SK-N-SH (cell line): ENCODE measurements at regions of chr11 and their contacts with region 1.

Region 1: DNA sequence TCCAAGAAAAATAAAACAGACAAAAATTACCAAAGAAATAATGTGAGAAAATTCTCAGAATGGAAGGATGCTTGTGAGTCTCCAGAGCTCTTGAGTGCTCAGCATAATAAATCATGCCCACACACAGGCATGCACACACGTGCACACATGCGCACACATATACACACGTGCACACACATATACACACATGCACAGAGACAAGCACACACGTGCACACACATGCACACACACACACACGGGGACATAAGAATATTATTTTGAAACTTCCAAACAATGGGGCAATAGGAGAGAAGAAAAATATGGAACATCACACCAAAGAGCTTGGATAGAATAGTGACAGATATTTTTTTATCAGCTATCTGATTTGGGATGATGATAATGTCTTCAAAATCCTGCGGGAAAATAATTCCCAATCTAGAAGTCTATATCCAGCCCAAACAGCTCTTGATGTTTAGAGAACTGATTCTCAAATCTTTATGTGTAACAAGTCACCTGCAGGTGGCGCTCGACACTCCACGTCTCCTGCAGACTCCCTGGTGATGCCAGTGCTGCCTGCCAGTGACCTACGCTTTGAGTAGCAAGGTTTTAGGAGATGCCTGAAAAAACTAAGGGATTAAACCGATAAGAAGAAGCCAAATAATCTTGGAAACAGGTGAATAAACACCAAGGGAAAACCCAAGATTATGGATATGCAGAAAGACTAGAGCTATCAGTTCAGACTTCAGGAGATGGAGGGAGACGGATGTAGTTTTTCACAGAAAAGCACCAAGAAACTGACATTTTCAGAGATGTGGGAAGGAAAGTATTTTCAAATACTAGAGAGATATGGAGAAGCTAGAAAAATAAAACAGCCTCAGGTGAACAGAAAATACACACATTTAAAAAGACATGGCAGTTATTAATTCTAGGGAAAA is 743.6 kb downstream of the ETS1 start:
- DNase-seq: peak; percentile 68
- H3K4me3 ChIP-seq: no peak overlapping the region; a peak in 1 of 4 replicates
- H3K27ac ChIP-seq: peak overlapping the region in 1 of 2 experiments; percentile 45; a peak in 2 of 4 replicates
- H3K4me1 ChIP-seq: peaks cover 0 to 4% of the 10 kb centered on the region in 2 experiments; a peak in 2 of 4 replicates
- H3K27me3 ChIP-seq: no peaks in the 10 kb centered on the region
- CTCF ChIP-seq: peak; percentile 87
- EP300 ChIP-seq: no peak
- RAD21 ChIP-seq: peak; percentile 80

Region 2: DNA sequence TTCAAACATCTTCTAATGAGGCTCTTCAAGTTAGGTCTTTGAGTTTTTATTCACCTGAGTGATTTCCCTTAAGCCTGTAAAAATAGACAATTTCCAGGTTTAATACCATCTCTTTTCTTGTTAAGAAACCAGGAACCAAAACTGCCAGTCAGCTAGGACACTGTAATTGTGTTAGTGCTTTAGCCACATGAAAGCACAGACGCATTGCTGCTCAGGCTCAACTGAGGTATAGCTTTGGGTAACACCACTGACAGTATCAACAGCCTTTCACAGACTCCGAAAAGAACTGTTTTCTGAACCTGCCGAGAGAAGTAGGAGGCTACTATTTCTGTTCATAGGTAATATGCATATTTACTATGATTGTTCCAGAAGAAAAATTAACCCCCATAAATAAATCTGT is 25.1 kb before region 1 on chr11:
- CTCF ChIA-PET with region 1: interaction called, 14 read pairs
- POLR2A ChIA-PET with region 1: no interaction called
- DNase-seq: no peak
- H3K4me3 ChIP-seq: no peak overlapping the region
- H3K27ac ChIP-seq: no peak overlapping the region
- H3K4me1 ChIP-seq: peaks cover 0 to 2% of the 10 kb centered on the region in 2 experiments; a peak in 1 of 4 replicates
- H3K27me3 ChIP-seq: no peaks in the 10 kb centered on the region
- CTCF ChIP-seq: no peak
- EP300 ChIP-seq: no peak
- RAD21 ChIP-seq: no peak

Region 3: GRCh38 chr11:127859941-127860354 is 16.2 kb after region 1 on chr11:
- CTCF ChIA-PET with region 1: interaction called, 13 read pairs
- POLR2A ChIA-PET with region 1: no interaction called
- DNase-seq: no peak
- H3K4me3 ChIP-seq: no peak overlapping the region
- H3K27ac ChIP-seq: no peak overlapping the region
- H3K4me1 ChIP-seq: peaks cover 0 to 7% of the 10 kb centered on the region in 2 experiments; a peak in 2 of 4 replicates
- H3K27me3 ChIP-seq: no peaks in the 10 kb centered on the region
- CTCF ChIP-seq: no peak
- EP300 ChIP-seq: no peak
- RAD21 ChIP-seq: no peak

Region 4: DNA sequence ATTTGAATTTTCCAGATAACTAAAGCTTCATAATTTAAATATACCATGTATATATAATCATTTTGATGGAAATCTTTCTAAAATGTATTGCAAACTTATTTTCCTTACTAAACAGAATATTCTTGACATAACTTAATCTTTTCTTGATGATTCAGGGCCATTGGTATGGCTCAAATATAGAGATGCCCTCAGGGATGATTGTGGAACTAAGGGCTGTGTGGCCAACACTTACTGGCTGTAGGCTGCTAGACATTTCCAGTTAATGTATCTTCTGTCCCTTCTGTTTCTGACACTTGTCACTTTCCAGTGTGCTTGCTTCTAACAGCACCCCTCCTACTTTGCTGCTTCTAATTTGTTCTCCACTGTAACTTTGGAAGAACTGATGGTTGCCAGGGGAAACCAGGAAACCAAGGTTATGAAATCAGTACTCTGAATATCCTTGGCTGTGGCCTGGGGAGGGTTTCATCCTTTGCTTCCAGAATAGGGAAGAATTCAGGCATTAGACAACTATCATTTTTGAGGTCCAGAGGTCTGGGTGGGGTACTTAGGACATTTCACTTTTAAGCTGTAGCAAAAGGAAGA is 46.4 kb after region 1 on chr11:
- CTCF ChIA-PET with region 1: interaction called, 11 read pairs
- POLR2A ChIA-PET with region 1: no interaction called
- DNase-seq: no peak
- H3K4me3 ChIP-seq: no peak overlapping the region
- H3K27ac ChIP-seq: no peak overlapping the region
- H3K4me1 ChIP-seq: no peaks in the 10 kb centered on the region
- H3K27me3 ChIP-seq: no peaks in the 10 kb centered on the region
- CTCF ChIP-seq: no peak
- EP300 ChIP-seq: no peak
- RAD21 ChIP-seq: no peak

Region 5: DNA sequence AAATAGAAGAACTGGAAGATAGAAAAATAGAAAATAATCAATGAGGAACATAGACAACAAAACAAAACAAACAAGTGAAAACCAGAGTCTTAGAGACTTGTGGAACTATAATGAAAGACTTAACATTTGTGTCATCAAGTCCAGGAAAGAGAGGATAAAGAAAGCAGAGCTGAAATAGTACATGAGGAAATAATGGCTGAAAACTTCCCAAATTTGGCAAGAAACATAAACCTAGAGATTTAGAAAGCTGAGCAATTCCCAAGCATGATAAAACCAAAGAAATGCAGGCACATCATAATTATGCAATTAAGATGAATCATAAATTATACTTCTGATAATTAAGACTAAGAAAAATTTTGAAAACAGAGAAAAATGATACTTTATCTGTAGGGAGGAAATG is 129.1 kb after region 1 on chr11:
- CTCF ChIA-PET with region 1: no interaction called
- POLR2A ChIA-PET with region 1: no interaction called
- DNase-seq: no peak
- H3K4me3 ChIP-seq: no peak overlapping the region
- H3K27ac ChIP-seq: no peak overlapping the region
- H3K4me1 ChIP-seq: no peaks in the 10 kb centered on the region
- H3K27me3 ChIP-seq: no peaks in the 10 kb centered on the region
- CTCF ChIP-seq: no peak
- EP300 ChIP-seq: no peak
- RAD21 ChIP-seq: no peak

Region 6: DNA sequence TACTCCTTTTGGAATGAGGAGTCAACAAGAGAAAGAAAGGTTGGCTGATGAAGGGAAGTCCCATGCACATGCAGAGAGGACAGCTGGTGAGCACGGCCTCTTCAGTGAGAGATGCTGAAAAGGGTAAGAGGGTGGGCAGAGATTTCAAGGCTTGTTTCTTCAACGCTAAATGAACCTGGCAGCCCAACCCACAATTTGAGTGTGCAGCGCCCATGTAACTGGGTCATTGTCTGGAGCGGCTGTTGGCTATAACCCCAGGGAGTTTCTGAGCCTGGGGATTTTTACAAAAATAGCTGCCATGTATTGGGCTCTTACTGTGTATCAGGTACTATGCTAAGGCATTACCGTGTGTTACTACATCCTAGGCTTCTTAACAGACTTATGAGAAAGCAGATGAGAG is 149.5 kb after region 1 on chr11:
- CTCF ChIA-PET with region 1: interaction called, 12 read pairs
- POLR2A ChIA-PET with region 1: no interaction called
- DNase-seq: no peak
- H3K4me3 ChIP-seq: no peak overlapping the region
- H3K27ac ChIP-seq: no peak overlapping the region
- H3K4me1 ChIP-seq: peaks cover 0 to 5% of the 10 kb centered on the region in 2 experiments; a peak in 1 of 4 replicates
- H3K27me3 ChIP-seq: no peaks in the 10 kb centered on the region
- CTCF ChIP-seq: no peak
- EP300 ChIP-seq: no peak
- RAD21 ChIP-seq: no peak

Region 7: GRCh38 chr11:128026596-128026995 is 182.9 kb after region 1 on chr11:
- CTCF ChIA-PET with region 1: interaction called, 70 read pairs
- POLR2A ChIA-PET with region 1: no interaction called
- DNase-seq: no peak
- H3K4me3 ChIP-seq: no peak overlapping the region
- H3K27ac ChIP-seq: peak overlapping the region in 1 of 2 experiments; percentile 69; a peak in 2 of 4 replicates
- H3K4me1 ChIP-seq: peaks cover 5 to 14% of the 10 kb centered on the region in 2 experiments; a peak in 2 of 4 replicates
- H3K27me3 ChIP-seq: no peaks in the 10 kb centered on the region
- CTCF ChIP-seq: no peak
- EP300 ChIP-seq: peak in 1 of 2 experiments; percentile 88; a peak in 2 of 4 replicates
- RAD21 ChIP-seq: no peak